H1 (cell line): ENCODE measurements at regions of chr12 and their contacts with region 1.

Region 1: DNA sequence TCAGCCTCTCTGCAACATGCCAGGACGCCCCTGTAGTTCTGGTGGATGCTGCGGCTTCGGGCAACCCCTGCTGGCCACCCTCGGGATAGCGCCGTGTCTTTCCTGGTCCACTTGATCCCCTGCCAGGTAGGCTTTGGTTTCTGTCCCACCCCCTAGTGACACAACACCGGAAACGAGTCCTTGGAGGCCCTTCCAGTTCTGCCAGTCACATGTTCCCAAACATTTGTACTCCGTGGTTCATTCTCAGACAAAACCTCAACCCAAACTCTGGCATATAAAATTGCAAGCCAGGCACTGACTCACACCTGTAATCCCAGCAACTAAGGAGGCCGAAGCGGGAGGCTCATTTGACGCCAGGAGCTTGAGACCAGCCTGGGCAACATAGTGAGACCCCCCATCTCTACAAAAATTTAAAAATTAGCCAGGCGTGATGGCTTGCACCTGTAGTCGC is 37.1 kb downstream of the RASAL1 start:
- DNase-seq: peak; percentile 78 to 97
- H3K4me3 ChIP-seq: no peak overlapping the region
- H3K27ac ChIP-seq: no peak overlapping the region
- H3K4me1 ChIP-seq: peaks cover 0 to 11% (median 5%) of the 10 kb centered on the region in 4 experiments; a peak in 5 of 7 replicates
- H3K27me3 ChIP-seq: no peaks in the 10 kb centered on the region
- CTCF ChIP-seq: peak; percentile 95 to 97 (median 96)
- EP300 ChIP-seq: no peak
- POLR2A ChIP-seq: no peak
- RAD21 ChIP-seq: peak; percentile 96 to 97

Region 2: GRCh38 chr12:113057565-113058485 is 40.6 kb before region 1 on chr12:
- CTCF ChIA-PET with region 1: interaction called, 139 read pairs
- POLR2A ChIA-PET with region 1: no interaction called
- DNase-seq: peak in 1 of 2 experiments; percentile 60
- H3K4me3 ChIP-seq: peak overlapping the region in 2 of 4 experiments; percentile 46 to 77; a peak in 3 of 8 replicates
- H3K27ac ChIP-seq: no peak overlapping the region
- H3K4me1 ChIP-seq: peaks cover 0 to 9% (median 6%) of the 10 kb centered on the region in 4 experiments; a peak in 5 of 7 replicates
- H3K27me3 ChIP-seq: peaks cover 0 to 22% (median 19%) of the 10 kb centered on the region in 4 experiments; a peak in 6 of 7 replicates
- CTCF ChIP-seq: no peak
- EP300 ChIP-seq: no peak
- POLR2A ChIP-seq: no peak
- RAD21 ChIP-seq: no peak

Region 3: GRCh38 chr12:113071135-113072112 is 27.0 kb before region 1 on chr12:
- CTCF ChIA-PET with region 1: interaction called, 36 read pairs
- POLR2A ChIA-PET with region 1: no interaction called
- DNase-seq: no peak
- H3K4me3 ChIP-seq: no peak overlapping the region
- H3K27ac ChIP-seq: no peak overlapping the region
- H3K4me1 ChIP-seq: peaks cover 0 to 11% (median 6%) of the 10 kb centered on the region in 4 experiments; a peak in 4 of 7 replicates
- H3K27me3 ChIP-seq: no peaks in the 10 kb centered on the region; a peak in 2 of 7 replicates
- CTCF ChIP-seq: no peak
- EP300 ChIP-seq: no peak
- POLR2A ChIP-seq: no peak
- RAD21 ChIP-seq: no peak

Region 4: DNA sequence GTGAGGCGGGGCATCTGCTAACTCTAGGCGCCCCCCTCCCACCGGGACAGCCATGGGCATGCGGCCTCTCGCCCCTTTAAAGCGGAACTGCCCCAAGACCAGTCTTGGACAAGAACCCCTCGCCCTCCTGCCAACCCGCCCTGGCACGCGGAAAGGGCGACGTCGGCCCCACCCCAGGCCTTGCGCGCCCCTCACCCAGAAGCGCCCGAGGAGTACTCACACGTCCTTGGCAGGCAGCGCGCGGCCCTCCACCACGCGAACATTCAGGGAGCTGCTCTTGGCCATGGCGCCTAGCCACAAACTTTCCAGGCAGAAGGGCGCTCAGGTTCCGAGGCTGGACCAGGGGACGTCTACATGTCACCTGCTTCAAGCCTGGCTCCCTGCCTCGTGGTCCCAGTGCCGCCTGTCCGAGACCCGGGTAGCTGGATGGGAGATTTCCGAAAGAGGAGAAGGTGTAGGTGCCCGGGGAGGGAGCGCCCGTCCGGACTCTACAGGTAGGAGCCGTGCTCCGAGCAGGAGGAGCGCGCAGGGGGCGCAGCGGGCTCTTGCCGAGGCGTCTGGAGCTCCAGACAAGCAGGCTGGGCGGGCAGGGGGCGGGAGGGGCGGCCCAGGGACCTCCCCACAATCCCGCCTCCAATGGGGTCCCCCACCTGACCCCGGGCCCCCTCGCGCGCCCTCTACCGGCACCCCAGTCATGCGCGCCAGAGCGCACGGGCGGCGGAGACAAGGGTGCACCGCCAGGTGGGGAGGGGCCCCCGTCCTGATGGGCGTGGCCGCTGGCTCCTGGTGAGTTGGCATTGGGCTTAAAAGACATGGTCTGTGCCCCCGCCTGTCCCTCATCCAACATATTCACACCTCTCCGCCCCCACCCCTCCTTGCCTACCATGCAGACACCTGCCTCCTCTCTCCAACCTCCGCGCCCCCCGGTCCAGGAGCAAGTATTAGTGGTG is 37.0 kb after region 1 on chr12 and contains the start of gene RASAL1:
- CTCF ChIA-PET with region 1: interaction called, 15 read pairs
- POLR2A ChIA-PET with region 1: interaction called, 4 read pairs
- DNase-seq: peak; percentile 70 to 99
- H3K4me3 ChIP-seq: peak within 1 kb of the TSS; percentile 39 to 62 (median 50)
- H3K27ac ChIP-seq: no peak within 1 kb of the TSS
- H3K4me1 ChIP-seq: peaks cover 0 to 13% (median 9%) of the 10 kb centered on the region in 4 experiments; a peak in 6 of 7 replicates
- H3K27me3 ChIP-seq: peaks cover 0 to 13% (median 6%) of the 10 kb centered on the region in 4 experiments; a peak in 5 of 7 replicates
- CTCF ChIP-seq: peak; percentile 64 to 86 (median 84)
- EP300 ChIP-seq: no peak
- POLR2A ChIP-seq: 0 out of 3 replicates have a peak, but pooled peaks of 1 of the 2 experiments have one; percentile 25
- RAD21 ChIP-seq: peak in 1 of 2 experiments; percentile 39; a peak in 2 of 4 replicates
- total RNA-seq, gene RASAL1: 5.0 and 6.4 TPM in 2 replicates

Region 5: DNA sequence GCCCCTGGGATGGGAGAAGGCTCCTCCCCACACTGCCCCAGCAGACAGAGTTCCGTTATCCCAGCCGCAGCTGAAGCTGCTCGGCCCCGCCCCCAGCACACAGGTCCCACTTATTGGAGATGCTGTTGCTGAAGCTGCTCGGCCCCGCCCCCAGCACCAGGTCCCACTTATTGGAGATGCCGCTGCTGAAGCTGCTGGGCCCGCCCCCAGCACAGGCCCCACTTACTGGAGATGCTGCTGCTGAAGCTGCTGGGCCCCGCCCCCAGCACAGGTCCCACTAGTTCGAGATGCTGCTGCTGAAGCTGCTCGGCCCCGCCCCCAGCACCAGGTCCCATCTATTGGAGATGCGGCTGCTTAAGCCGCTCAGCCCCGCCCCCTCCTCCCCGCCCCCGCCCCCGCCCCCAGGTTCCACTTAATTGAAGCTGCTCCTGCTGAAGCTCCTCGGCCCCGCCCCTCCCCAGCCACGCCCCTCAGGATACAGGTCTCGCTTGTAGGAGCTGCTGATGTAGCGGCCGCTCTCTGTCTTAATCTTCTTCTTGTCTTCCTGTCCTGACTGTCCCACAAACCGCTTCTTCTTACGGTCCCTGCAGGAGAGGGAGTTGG is 63.0 kb after region 1 on chr12:
- CTCF ChIA-PET with region 1: interaction called, 13 read pairs
- POLR2A ChIA-PET with region 1: interaction called, 3 read pairs
- DNase-seq: peak; percentile 95 to 98
- H3K4me3 ChIP-seq: no peak overlapping the region
- H3K27ac ChIP-seq: no peak overlapping the region
- H3K4me1 ChIP-seq: peaks cover 5 to 13% (median 9%) of the 10 kb centered on the region in 4 experiments
- H3K27me3 ChIP-seq: no peaks in the 10 kb centered on the region
- CTCF ChIP-seq: no peak
- EP300 ChIP-seq: no peak
- POLR2A ChIP-seq: no peak
- RAD21 ChIP-seq: no peak